ENCODE measurements at regions of chr5 and their contacts with region 1.

Region 1: GRCh38 chr5:20340127-20340526 is 352.1 kb upstream of the CDH18 start:
- DNase-seq: no peak
- H3K4me3 ChIP-seq: no peak overlapping the region
- H3K27ac ChIP-seq: no peak overlapping the region
- H3K4me1 ChIP-seq: no peaks in the 10 kb centered on the region
- H3K27me3 ChIP-seq: no peaks in the 10 kb centered on the region
- CTCF ChIP-seq: peak in 2 of 3 experiments; percentile 6 to 16; a peak in 2 of 4 replicates
- EP300 ChIP-seq: no peak
- POLR2A ChIP-seq: no peak
- RAD21 ChIP-seq: peak; percentile 37 to 51; a peak in 3 of 4 replicates

Region 2: GRCh38 chr5:20353499-20353898 is 13.4 kb after region 1 on chr5:
- CTCF ChIA-PET with region 1: interaction called, 14 read pairs
- POLR2A ChIA-PET with region 1: no interaction called
- DNase-seq: no peak
- H3K4me3 ChIP-seq: no peak overlapping the region
- H3K27ac ChIP-seq: no peak overlapping the region
- H3K4me1 ChIP-seq: no peaks in the 10 kb centered on the region
- H3K27me3 ChIP-seq: no peaks in the 10 kb centered on the region
- CTCF ChIP-seq: no peak
- EP300 ChIP-seq: no peak
- POLR2A ChIP-seq: no peak
- RAD21 ChIP-seq: no peak

Measured in H1 (cell line).